K562 (cell line): ENCODE measurements at regions of chr18 and their contacts with region 1.

Region 1: DNA sequence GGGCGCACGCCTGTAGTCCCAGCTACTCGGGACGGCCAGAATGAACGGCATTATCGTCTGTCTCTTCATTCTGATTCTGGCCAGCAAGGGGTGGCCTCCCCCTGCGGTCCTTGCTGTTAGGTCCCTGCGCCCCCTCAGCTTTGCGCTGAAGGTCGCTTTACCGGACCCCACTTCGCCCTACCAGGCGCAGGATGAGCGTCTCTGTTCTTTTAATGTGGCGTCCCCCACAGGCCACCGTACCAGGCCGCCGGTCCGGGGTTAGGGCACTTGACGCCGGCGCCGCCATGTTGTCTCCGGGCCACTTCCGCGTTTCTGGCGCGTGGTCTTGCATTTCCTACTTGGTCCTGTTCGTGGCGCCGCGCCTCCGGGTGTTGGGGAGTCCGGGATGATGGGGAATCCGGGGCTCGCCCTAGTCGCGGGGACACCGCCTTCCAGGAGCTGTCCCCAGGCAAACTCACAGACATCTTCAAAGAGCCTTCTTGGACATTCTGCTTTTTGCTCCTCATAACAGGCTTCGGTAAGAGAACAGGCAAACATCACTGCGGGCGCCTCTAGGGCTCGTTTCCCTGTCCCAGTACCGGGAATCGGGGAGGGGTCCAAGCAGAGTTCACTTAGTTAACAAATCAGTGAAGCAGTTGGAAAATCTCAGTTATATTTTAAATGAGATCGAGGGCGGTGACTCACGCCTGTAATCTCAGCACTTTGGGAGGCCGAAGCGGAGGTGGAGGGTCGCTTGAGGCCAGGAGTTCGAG is 8.5 kb upstream of the NARS1 start:
- DNase-seq: peak; percentile 80 to 94 (median 84)
- ATAC-seq: peak; percentile 99
- H3K4me3 ChIP-seq: peak overlapping the region; percentile 48
- H3K27ac ChIP-seq: peak overlapping the region; percentile 69
- H3K4me1 ChIP-seq: peaks cover 6 to 13% of the 10 kb centered on the region in 2 experiments; a peak in 4 of 5 replicates
- H3K27me3 ChIP-seq: no peaks in the 10 kb centered on the region
- CTCF ChIP-seq: peak; percentile 78 to 83 (median 78)
- EP300 ChIP-seq: peak; percentile 20; the same call in 1 of the 2 replicates
- POLR2A ChIP-seq: no peak
- RAD21 ChIP-seq: peak; percentile 82

Region 2: GRCh38 chr18:58117786-58118403 is 487.7 kb after region 1 on chr18:
- CTCF ChIA-PET with region 1: no interaction called
- POLR2A ChIA-PET with region 1: no interaction called
- in situ Hi-C with region 1: loop called (anchors 10 kb)
- intact Hi-C with region 1: loop called (anchors 2 kb)
- DNase-seq: peak; percentile 68 to 83 (median 73)
- ATAC-seq: peak; percentile 87
- H3K4me3 ChIP-seq: no peak overlapping the region
- H3K27ac ChIP-seq: peak overlapping the region; percentile 27; the same call in 2 of the 3 replicates
- H3K4me1 ChIP-seq: peaks cover 3 to 14% of the 10 kb centered on the region in 2 experiments; a peak in 3 of 5 replicates
- H3K27me3 ChIP-seq: no peaks in the 10 kb centered on the region
- CTCF ChIP-seq: no peak
- EP300 ChIP-seq: peak; percentile 75
- POLR2A ChIP-seq: no peak
- RAD21 ChIP-seq: 0 out of 4 replicates have a peak, but pooled peaks of 1 of the 2 experiments have one; percentile 12